ENCODE measurements at regions of chr1 and their contacts with region 1.

Region 1: DNA sequence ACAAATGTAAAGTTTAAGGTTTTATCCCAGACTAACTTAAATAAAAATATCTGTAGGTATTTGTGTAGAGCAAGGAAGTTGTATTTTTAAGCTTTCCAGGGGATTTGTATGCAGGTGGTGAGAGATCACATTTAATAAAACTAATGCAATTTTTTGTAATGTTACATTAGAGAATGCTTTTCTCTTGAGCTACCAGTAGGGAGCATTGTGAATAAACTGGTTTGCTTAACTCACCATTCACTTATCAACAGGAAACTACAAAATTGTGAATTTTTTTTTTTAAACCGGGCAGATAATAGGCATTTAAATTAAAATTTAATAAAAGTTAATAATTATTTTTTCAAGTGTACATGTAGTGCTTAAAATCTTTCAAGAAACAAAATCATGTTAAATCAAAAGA is 78.6 kb downstream of the IVNS1ABP start:
- DNase-seq: peak in 2 of 9 experiments; percentile 24 to 55
- ATAC-seq: peak; percentile 38
- H3K4me3 ChIP-seq: no peak overlapping the region
- H3K4me3 Mint-ChIP-seq: no peak overlapping the region
- H3K27ac ChIP-seq: no peak overlapping the region
- H3K27ac Mint-ChIP-seq: no peak overlapping the region
- H3K4me1 ChIP-seq: peaks cover 3% of the 10 kb centered on the region
- H3K4me1 Mint-ChIP-seq: peaks cover 26% of the 10 kb centered on the region
- H3K27me3 ChIP-seq: no peaks in the 10 kb centered on the region
- H3K27me3 Mint-ChIP-seq: no peaks in the 10 kb centered on the region
- CTCF ChIP-seq: peak; percentile 74

Region 2: DNA sequence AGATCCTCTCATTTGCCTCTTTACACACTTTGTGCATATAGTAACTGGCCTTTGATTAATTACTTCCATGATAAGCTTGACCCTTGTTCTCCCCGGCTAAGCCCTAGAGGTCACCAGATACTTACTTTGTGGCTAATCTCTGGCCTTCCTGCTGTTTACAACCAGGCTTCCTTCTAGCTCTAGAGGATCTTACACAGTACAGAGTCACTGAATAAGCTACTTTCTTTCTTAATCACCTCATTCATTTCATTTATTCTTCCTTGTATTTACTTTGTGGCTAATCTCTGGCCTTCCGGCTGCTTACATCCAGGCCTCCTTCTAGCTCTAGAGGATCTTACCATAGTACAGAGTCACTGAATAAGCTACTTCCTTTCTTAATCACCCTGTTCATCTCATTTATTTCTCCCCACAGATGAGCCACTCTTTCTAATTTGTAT is 995.9 kb before region 1 on chr1:
- CTCF ChIA-PET with region 1: no interaction called
- POLR2A ChIA-PET with region 1: no interaction called
- intact Hi-C with region 1: no loop called
- DNase-seq: no peak
- ATAC-seq: no peak
- H3K4me3 ChIP-seq: no peak overlapping the region
- H3K4me3 Mint-ChIP-seq: no peak overlapping the region
- H3K27ac ChIP-seq: no peak overlapping the region
- H3K27ac Mint-ChIP-seq: no peak overlapping the region
- H3K4me1 ChIP-seq: no peaks in the 10 kb centered on the region
- H3K4me1 Mint-ChIP-seq: no peaks in the 10 kb centered on the region
- H3K27me3 ChIP-seq: no peaks in the 10 kb centered on the region
- H3K27me3 Mint-ChIP-seq: peaks cover 6% of the 10 kb centered on the region
- CTCF ChIP-seq: no peak

Region 3: GRCh38 chr1:185227161-185227560 is 11.3 kb before region 1 on chr1:
- CTCF ChIA-PET with region 1: no interaction called
- POLR2A ChIA-PET with region 1: no interaction called
- intact Hi-C with region 1: no loop called
- DNase-seq: no peak
- ATAC-seq: no peak
- H3K4me3 ChIP-seq: no peak overlapping the region
- H3K4me3 Mint-ChIP-seq: no peak overlapping the region
- H3K27ac ChIP-seq: no peak overlapping the region
- H3K27ac Mint-ChIP-seq: no peak overlapping the region
- H3K4me1 ChIP-seq: no peaks in the 10 kb centered on the region
- H3K4me1 Mint-ChIP-seq: no peaks in the 10 kb centered on the region
- H3K27me3 ChIP-seq: no peaks in the 10 kb centered on the region
- H3K27me3 Mint-ChIP-seq: no peaks in the 10 kb centered on the region
- CTCF ChIP-seq: no peak

Region 4: DNA sequence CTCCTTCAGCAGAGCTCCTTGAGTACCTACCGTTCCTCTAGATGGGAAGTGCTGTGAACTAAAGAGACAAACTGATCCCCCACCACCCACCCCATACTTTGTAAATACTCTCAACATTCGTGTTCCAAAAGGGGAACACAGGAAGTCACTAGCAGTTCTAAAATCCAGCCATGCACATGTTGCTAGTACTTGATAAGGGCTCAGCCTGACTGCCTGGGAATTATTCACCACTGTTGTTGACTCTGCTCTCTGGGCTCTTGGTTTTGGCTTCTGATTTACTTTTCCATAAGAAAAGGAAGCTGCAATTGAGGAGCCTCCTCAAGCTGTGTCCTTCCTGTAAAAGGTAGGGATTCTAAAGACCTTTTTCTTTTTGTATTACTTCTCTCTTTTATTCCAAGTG is 11.1 kb after region 1 on chr1:
- CTCF ChIA-PET with region 1: interaction called, 20 read pairs
- POLR2A ChIA-PET with region 1: interaction called, 3 read pairs
- intact Hi-C with region 1: no loop called
- DNase-seq: no peak
- ATAC-seq: no peak
- H3K4me3 ChIP-seq: no peak overlapping the region
- H3K4me3 Mint-ChIP-seq: no peak overlapping the region
- H3K27ac ChIP-seq: no peak overlapping the region
- H3K27ac Mint-ChIP-seq: no peak overlapping the region
- H3K4me1 ChIP-seq: no peaks in the 10 kb centered on the region
- H3K4me1 Mint-ChIP-seq: peaks cover 12% of the 10 kb centered on the region
- H3K27me3 ChIP-seq: no peaks in the 10 kb centered on the region
- H3K27me3 Mint-ChIP-seq: no peaks in the 10 kb centered on the region
- CTCF ChIP-seq: no peak

Region 5: GRCh38 chr1:185300152-185300551 is 61.7 kb after region 1 on chr1:
- CTCF ChIA-PET with region 1: interaction called, 14 read pairs
- POLR2A ChIA-PET with region 1: interaction called, 3 read pairs
- intact Hi-C with region 1: no loop called
- DNase-seq: no peak
- ATAC-seq: no peak
- H3K4me3 ChIP-seq: no peak overlapping the region
- H3K4me3 Mint-ChIP-seq: no peak overlapping the region
- H3K27ac ChIP-seq: no peak overlapping the region
- H3K27ac Mint-ChIP-seq: no peak overlapping the region
- H3K4me1 ChIP-seq: no peaks in the 10 kb centered on the region
- H3K4me1 Mint-ChIP-seq: peaks cover 3% of the 10 kb centered on the region
- H3K27me3 ChIP-seq: no peaks in the 10 kb centered on the region
- H3K27me3 Mint-ChIP-seq: no peaks in the 10 kb centered on the region
- CTCF ChIP-seq: no peak

Region 6: DNA sequence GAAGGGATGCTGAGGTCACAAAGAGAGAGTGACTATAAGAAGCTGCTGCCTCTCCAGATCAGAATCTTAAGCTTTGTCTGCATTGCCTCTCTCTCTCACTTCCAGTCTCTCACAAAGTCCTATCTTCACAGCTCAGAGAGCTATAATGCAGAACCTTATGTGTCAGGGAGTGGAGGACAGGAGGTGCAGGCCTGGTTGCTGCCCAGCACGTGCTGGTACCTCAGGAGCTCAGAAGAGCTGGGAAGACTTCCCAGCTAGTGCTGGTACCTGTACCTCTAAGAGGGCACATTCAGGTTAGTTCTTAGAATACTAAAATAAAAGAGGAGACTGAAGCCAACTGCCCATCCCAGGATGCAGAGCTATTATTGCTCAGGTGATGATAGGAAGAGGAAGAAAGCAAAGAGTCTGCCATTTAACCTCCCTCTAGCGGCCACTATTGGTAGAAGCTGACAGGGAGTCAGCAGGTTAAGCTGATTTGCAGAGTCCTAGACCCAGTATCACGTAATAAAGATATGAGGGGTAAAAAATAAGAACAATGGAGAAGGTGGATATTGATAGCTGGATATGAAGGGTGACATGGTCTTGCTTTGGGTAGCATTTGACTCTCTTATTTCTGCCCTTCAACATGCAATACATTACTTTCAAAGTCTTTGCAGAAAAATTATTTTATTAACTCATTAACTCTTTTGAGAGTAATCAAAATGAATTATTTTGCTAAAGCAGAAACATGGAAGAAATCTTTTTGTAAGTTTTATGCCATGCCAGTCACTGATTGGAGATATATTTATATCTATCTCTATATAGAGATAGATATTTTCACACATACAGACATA is 357.6 kb after region 1 on chr1:
- CTCF ChIA-PET with region 1: interaction called, 6 read pairs
- POLR2A ChIA-PET with region 1: no interaction called
- intact Hi-C with region 1: loop called in 1 of 2 experiments (anchors 10 kb)
- DNase-seq: peak; percentile 18 to 76 (median 55)
- ATAC-seq: peak; percentile 78
- H3K4me3 ChIP-seq: no peak overlapping the region
- H3K4me3 Mint-ChIP-seq: no peak overlapping the region
- H3K27ac ChIP-seq: no peak overlapping the region
- H3K27ac Mint-ChIP-seq: no peak overlapping the region
- H3K4me1 ChIP-seq: peaks cover 6% of the 10 kb centered on the region
- H3K4me1 Mint-ChIP-seq: peaks cover 16% of the 10 kb centered on the region
- H3K27me3 ChIP-seq: no peaks in the 10 kb centered on the region
- H3K27me3 Mint-ChIP-seq: no peaks in the 10 kb centered on the region
- CTCF ChIP-seq: peak; percentile 58

Region 7: GRCh38 chr1:185681034-185681633 is 442.7 kb after region 1 on chr1:
- CTCF ChIA-PET with region 1: interaction called, 24 read pairs
- POLR2A ChIA-PET with region 1: interaction called, 4 read pairs
- intact Hi-C with region 1: no loop called
- DNase-seq: peak in 4 of 9 experiments; percentile 15 to 67 (median 40)
- ATAC-seq: peak; percentile 51
- H3K4me3 ChIP-seq: no peak overlapping the region
- H3K4me3 Mint-ChIP-seq: no peak overlapping the region
- H3K27ac ChIP-seq: no peak overlapping the region
- H3K27ac Mint-ChIP-seq: no peak overlapping the region
- H3K4me1 ChIP-seq: peaks cover 10% of the 10 kb centered on the region
- H3K4me1 Mint-ChIP-seq: peaks cover 26% of the 10 kb centered on the region
- H3K27me3 ChIP-seq: no peaks in the 10 kb centered on the region
- H3K27me3 Mint-ChIP-seq: no peaks in the 10 kb centered on the region
- CTCF ChIP-seq: peak; percentile 30

Measured in CD8-positive, alpha-beta T cell (primary cell).